OCI-LY7 (cell line): ENCODE measurements at regions of chr2 and their contacts with region 1.

Region 1: GRCh38 chr2:17160594-17160993 is 357.6 kb downstream of the RAD51AP2 start:
- DNase-seq: peak; percentile 47
- H3K4me3 ChIP-seq: no peak overlapping the region
- H3K27ac ChIP-seq: peak overlapping the region; percentile 17
- H3K4me1 ChIP-seq: peaks cover 16% of the 10 kb centered on the region
- CTCF ChIP-seq: no peak

Region 2: DNA sequence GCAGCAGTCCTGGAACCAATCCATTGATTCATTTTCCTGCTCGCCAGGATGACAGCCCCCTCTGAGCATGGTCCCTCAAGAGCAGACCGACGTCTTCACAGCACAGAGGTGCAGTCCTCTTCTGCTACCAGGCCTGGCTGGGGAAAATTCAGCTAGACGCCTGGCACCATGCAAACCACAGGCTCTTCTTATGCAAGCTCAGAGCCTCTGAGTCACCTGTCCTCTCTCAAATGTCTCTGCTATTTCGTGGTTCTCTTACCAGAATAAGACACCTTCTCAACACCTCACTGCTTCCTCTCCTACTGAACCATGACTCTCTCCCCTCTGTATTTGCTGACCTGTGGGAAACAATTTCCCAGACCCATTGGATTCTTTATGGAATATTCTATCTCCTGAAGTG is 415.1 kb before region 1 on chr2:
- CTCF ChIA-PET with region 1: no interaction called
- POLR2A ChIA-PET with region 1: no interaction called
- intact Hi-C with region 1: no loop called
- DNase-seq: no peak
- H3K4me3 ChIP-seq: no peak overlapping the region
- H3K27ac ChIP-seq: no peak overlapping the region
- H3K4me1 ChIP-seq: peaks cover 7% of the 10 kb centered on the region
- CTCF ChIP-seq: no peak

Region 3: GRCh38 chr2:17148407-17149145 is 12.0 kb before region 1 on chr2:
- CTCF ChIA-PET with region 1: no interaction called
- POLR2A ChIA-PET with region 1: interaction called, 13 read pairs
- intact Hi-C with region 1: no loop called
- DNase-seq: peak; percentile 4
- H3K4me3 ChIP-seq: no peak overlapping the region
- H3K27ac ChIP-seq: no peak overlapping the region
- H3K4me1 ChIP-seq: no peaks in the 10 kb centered on the region
- CTCF ChIP-seq: peak; percentile 71